CD14-positive monocyte (primary cell): ENCODE measurements at regions of chr17 and their contacts with region 1.

Region 1: GRCh38 chr17:73291260-73291801 is 20.5 kb downstream of the CDC42EP4 start:
- DNase-seq: peak; percentile 85 to 92 (median 89)
- H3K4me3 ChIP-seq: peak overlapping the region; percentile 9 to 70 (median 11)
- H3K4me3 Mint-ChIP-seq: peak overlapping the region; percentile 61 to 88
- H3K27ac ChIP-seq: peak overlapping the region; percentile 53 to 84
- H3K27ac Mint-ChIP-seq: peak overlapping the region; percentile 90 to 96 (median 95)
- H3K4me1 ChIP-seq: peaks cover 37 to 49% of the 10 kb centered on the region in 2 donors
- H3K4me1 Mint-ChIP-seq: peaks cover 60% of the 10 kb centered on the region
- H3K27me3 ChIP-seq: no peaks in the 10 kb centered on the region
- H3K27me3 Mint-ChIP-seq: peaks cover 1 to 6% (median 4%) of the 10 kb centered on the region in 3 donors
- CTCF ChIP-seq: no peak

Region 2: GRCh38 chr17:73304971-73305812 is 13.9 kb after region 1 on chr17:
- intact Hi-C with region 1: loop called in 1 of 2 experiments (anchors 2 kb)
- DNase-seq: peak in 2 of 3 donors; percentile 54 to 55
- H3K4me3 ChIP-seq: peak overlapping the region; percentile 34 to 76 (median 36)
- H3K4me3 Mint-ChIP-seq: peak overlapping the region; percentile 80 to 92
- H3K27ac ChIP-seq: peak overlapping the region; percentile 12 to 82
- H3K27ac Mint-ChIP-seq: peak overlapping the region; percentile 74 to 92 (median 83)
- H3K4me1 ChIP-seq: peaks cover 33 to 47% of the 10 kb centered on the region in 2 donors
- H3K4me1 Mint-ChIP-seq: peaks cover 46% of the 10 kb centered on the region
- H3K27me3 ChIP-seq: no peaks in the 10 kb centered on the region
- H3K27me3 Mint-ChIP-seq: peaks cover 0 to 3% (median 0%) of the 10 kb centered on the region in 3 donors
- CTCF ChIP-seq: peak; percentile 18

Region 3: GRCh38 chr17:73446617-73447016 is 155.3 kb after region 1 on chr17:
- intact Hi-C with region 1: no loop called
- DNase-seq: no peak
- H3K4me3 ChIP-seq: no peak overlapping the region
- H3K4me3 Mint-ChIP-seq: no peak overlapping the region
- H3K27ac ChIP-seq: no peak overlapping the region
- H3K27ac Mint-ChIP-seq: no peak overlapping the region
- H3K4me1 ChIP-seq: no peaks in the 10 kb centered on the region
- H3K4me1 Mint-ChIP-seq: no peaks in the 10 kb centered on the region
- H3K27me3 ChIP-seq: no peaks in the 10 kb centered on the region
- H3K27me3 Mint-ChIP-seq: peaks cover 0 to 2% (median 2%) of the 10 kb centered on the region in 3 donors
- CTCF ChIP-seq: no peak